Activated T-helper 2 cell treated with anti-CD3 and anti-CD28 coated beads, Interferon-gamma antibody, Interleukin-2, Interleukin-4, amounts not matched to agents 10 μg/mL and 5 μg/mL and 100 μg/mL, durations not matched to agents 14 hours and 24 hours and 36 hours (primary cell): ENCODE measurements at regions of chr6 and their contacts with region 1.

Region 1: DNA sequence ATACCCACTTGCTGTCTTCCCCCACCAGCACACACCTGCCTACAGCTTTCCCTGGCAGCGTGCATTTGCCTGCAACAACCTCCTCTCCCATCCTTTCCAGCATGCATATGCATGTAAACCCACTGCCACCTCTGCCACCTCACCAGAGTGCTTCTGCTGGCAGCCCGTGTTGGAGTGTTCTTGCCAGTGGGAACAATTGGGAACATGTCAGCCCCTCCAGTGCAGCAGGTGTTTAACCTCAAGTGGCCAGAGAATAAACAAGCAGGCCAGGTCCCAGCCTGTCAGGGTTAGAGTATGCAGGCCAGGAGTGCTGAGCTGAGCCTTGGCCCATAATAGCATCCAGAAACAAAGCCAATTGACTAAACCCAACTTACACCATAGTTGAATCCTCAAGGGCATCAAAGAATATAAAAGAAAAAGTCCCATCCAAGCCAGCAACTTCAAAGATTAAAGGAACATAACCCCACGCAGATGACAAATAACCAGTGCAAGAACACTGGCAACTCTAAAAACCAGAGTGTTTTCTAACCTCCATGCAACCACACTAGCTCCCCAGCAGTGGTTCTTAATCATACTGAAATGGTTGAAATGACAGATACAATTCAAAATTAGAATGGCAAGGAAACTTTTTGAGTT is 1212.1 kb upstream of the CITED2 start:
- DNase-seq: peak; percentile 16
- H3K4me3 Mint-ChIP-seq: peak overlapping the region; percentile 43
- H3K27ac Mint-ChIP-seq: peak overlapping the region; percentile 91
- H3K4me1 Mint-ChIP-seq: peaks cover 58% of the 10 kb centered on the region
- H3K27me3 Mint-ChIP-seq: no peaks in the 10 kb centered on the region

Region 2: DNA sequence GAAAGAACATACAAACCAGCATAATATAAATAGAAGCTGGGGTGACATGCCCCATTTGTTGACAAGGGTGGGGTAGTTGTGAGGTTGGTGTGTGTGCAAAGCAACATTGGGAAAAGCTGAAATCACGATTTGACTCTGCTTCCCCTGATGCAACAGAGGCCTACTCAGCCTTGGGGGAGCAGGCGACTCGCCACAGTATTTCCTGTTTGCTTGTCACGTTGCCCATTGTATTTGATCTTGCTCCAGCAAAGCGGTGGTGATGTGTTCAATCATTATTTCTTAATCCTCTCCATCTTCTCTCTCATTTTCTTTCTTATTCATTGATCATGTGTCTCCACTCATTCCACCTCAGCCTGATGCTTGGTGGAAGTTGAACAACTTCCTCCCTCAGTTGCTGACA is 1046.3 kb before region 1 on chr6:
- intact Hi-C with region 1: loop called (anchors 10 kb)
- DNase-seq: peak; percentile 50
- H3K4me3 Mint-ChIP-seq: no peak overlapping the region
- H3K27ac Mint-ChIP-seq: peak overlapping the region; percentile 77
- H3K4me1 Mint-ChIP-seq: peaks cover 56% of the 10 kb centered on the region
- H3K27me3 Mint-ChIP-seq: no peaks in the 10 kb centered on the region

Region 3: DNA sequence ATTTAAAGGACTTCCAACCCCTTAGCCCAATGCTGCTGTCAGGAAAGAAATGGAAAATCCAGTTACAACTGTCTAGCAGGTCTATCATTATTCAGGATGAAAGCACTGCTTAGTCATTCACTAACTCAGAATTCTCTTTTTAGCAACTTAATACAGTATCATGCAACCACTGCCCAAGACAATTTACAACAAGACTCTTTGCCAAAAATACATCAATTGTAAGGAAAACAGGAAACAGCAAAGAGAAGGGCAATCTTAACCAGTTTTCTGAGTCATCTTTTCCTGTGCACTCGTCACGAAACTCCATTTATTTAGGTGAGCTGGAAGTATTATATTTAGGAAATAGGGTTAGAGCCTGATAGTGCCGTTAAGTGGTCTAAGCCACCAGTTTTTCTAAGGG is 14.4 kb before region 1 on chr6:
- intact Hi-C with region 1: loop called (anchors 1 kb)
- DNase-seq: no peak
- H3K4me3 Mint-ChIP-seq: no peak overlapping the region
- H3K27ac Mint-ChIP-seq: peak overlapping the region; percentile 70
- H3K4me1 Mint-ChIP-seq: peaks cover 23% of the 10 kb centered on the region
- H3K27me3 Mint-ChIP-seq: peaks cover 5% of the 10 kb centered on the region

Region 4: DNA sequence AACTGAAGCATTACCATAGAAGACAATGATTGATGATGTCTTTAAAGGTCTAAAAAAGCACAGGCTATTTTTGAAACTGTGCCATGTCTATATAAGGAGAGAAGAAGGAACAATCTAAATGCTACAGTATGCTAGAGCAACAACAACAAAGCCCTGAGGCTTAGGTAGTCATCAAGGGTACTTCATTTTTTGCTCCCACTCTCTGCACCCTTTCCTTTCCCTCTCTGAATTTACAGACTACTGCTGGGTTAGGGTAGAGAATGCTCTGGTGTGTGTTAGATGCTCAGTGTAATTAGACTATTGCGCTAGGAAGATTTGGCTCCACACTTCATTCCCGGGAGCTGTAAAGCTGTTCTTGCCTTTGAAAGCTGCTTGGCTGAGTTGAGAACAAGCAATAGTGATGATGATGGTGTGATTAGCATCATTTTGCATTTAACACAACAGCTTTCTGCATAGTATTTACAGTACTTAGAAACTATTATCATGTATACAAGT is 50.4 kb after region 1 on chr6:
- intact Hi-C with region 1: no loop called
- DNase-seq: no peak
- H3K4me3 Mint-ChIP-seq: no peak overlapping the region
- H3K27ac Mint-ChIP-seq: no peak overlapping the region
- H3K4me1 Mint-ChIP-seq: peaks cover 4% of the 10 kb centered on the region
- H3K27me3 Mint-ChIP-seq: no peaks in the 10 kb centered on the region

Region 5: GRCh38 chr6:140711019-140711613 is 124.6 kb after region 1 on chr6:
- intact Hi-C with region 1: loop called (anchors 5 kb)
- DNase-seq: no peak
- H3K4me3 Mint-ChIP-seq: no peak overlapping the region
- H3K27ac Mint-ChIP-seq: no peak overlapping the region
- H3K4me1 Mint-ChIP-seq: peaks cover 3% of the 10 kb centered on the region
- H3K27me3 Mint-ChIP-seq: no peaks in the 10 kb centered on the region

Region 6: DNA sequence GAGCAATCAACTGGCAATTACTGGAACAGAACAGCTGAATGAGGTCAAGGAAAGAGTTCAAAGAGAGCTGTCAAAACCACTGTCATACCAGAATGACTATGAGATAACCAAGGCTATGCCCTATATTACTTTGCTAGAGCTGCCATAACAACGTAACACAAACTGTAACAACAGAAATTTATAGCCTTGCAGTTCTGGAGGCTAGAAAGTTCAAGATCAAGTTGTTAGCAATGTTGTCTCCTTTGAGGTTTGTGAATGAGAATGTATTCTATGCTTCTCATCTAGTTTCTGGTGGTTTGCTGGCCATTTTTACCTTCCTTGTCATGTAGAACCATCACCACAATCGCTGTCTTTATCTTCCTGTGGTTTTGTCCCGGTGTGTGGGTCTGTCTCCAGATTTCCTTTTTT is 223.2 kb after region 1 on chr6:
- intact Hi-C with region 1: loop called (anchors 1 kb)
- DNase-seq: no peak
- H3K4me3 Mint-ChIP-seq: no peak overlapping the region
- H3K27ac Mint-ChIP-seq: peak overlapping the region; percentile 69
- H3K4me1 Mint-ChIP-seq: peaks cover 17% of the 10 kb centered on the region
- H3K27me3 Mint-ChIP-seq: peaks cover 13% of the 10 kb centered on the region